Mammary epithelial cell (primary cell): ENCODE measurements at regions of chr17 and their contacts with region 1.

Region 1: DNA sequence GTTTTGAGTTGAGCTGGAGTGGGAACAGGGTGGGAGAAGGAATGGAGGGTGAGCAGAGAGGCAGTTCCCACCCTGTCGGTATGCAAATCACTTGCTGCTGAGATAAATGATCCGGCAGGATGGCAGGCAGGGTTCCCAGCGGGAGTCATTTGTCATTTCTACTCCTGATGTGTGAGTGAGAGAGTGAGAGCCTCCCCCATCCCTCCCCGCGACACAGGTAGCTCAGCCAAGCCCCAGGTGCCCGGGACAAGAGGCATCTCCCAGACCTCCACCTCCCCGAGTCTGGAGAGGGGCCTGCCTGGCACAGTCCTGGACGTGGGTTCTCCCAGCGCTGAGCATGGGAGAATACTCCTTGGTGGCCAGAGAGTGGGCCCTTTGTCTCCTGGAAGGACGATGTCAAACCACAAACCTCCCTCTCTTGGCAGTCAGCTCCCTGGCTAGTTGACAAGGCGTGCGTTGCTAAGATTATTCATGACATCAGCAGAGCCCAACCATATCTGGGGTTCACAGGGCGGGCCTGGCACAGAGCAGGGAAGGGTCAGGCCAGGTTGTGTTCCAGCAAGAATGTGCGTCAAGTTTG is 33.7 kb upstream of the TNRC6C start:
- DNase-seq: peak; percentile 12
- H3K4me3 ChIP-seq: no peak overlapping the region
- H3K27ac ChIP-seq: no peak overlapping the region
- H3K4me1 ChIP-seq: no peaks in the 10 kb centered on the region
- H3K27me3 ChIP-seq: peaks cover 3% of the 10 kb centered on the region
- CTCF ChIP-seq: no peak

Region 2: GRCh38 chr17:77887464-77888241 is 37.2 kb before region 1 on chr17:
- CTCF ChIA-PET with region 1: no interaction called
- dilution Hi-C with region 1: loop called (anchors 5 kb)
- in situ Hi-C with region 1: no loop called
- intact Hi-C with region 1: no loop called
- DNase-seq: peak; percentile 24
- H3K4me3 ChIP-seq: peak overlapping the region; percentile 40 to 49 (median 41)
- H3K27ac ChIP-seq: no peak overlapping the region
- H3K4me1 ChIP-seq: peaks cover 12% of the 10 kb centered on the region
- H3K27me3 ChIP-seq: no peaks in the 10 kb centered on the region
- CTCF ChIP-seq: no peak

Region 3: DNA sequence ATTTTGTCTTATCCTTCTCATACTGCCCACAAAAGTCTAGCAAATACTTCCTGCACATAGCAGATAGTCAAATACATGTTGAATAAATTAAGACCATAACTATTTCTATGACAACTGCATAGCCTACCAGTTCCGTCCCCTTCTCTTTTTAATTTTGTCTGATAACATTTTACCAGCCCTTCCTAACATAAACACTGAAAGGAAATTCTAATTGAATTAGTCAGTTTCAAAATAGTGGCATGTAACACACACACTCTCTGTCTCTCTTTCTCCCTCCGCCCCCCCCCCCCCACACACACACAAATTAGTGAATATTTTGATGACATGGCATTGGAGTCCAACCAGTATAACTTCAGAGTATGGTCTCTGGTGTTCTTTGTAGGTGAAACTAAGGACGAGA is 75.5 kb after region 1 on chr17:
- CTCF ChIA-PET with region 1: no interaction called
- dilution Hi-C with region 1: no loop called
- in situ Hi-C with region 1: no loop called
- intact Hi-C with region 1: no loop called
- DNase-seq: peak; percentile 2
- H3K4me3 ChIP-seq: no peak overlapping the region
- H3K27ac ChIP-seq: no peak overlapping the region
- H3K4me1 ChIP-seq: peaks cover 3% of the 10 kb centered on the region
- H3K27me3 ChIP-seq: no peaks in the 10 kb centered on the region
- CTCF ChIP-seq: no peak